Dendritic cell treated with granulocyte-macrophage colony-stimulating factor and Interleukin-4, amounts not matched to agents 40 ng/mL and 50 ng/mL, for 4 days (primary cell): ENCODE measurements at regions of chr18 and their contacts with region 1.

Region 1: GRCh38 chr18:21777814-21778213 is 37.2 kb downstream of the MIB1 start:
- H3K4me3 Mint-ChIP-seq: no peak overlapping the region
- H3K27ac Mint-ChIP-seq: no peak overlapping the region
- H3K4me1 Mint-ChIP-seq: no peaks in the 10 kb centered on the region
- H3K27me3 Mint-ChIP-seq: no peaks in the 10 kb centered on the region

Region 2: GRCh38 chr18:21820035-21820810 is 42.4 kb after region 1 on chr18:
- intact Hi-C with region 1: no loop called
- H3K4me3 Mint-ChIP-seq: no peak overlapping the region
- H3K27ac Mint-ChIP-seq: no peak overlapping the region
- H3K4me1 Mint-ChIP-seq: no peaks in the 10 kb centered on the region
- H3K27me3 Mint-ChIP-seq: no peaks in the 10 kb centered on the region

Region 3: DNA sequence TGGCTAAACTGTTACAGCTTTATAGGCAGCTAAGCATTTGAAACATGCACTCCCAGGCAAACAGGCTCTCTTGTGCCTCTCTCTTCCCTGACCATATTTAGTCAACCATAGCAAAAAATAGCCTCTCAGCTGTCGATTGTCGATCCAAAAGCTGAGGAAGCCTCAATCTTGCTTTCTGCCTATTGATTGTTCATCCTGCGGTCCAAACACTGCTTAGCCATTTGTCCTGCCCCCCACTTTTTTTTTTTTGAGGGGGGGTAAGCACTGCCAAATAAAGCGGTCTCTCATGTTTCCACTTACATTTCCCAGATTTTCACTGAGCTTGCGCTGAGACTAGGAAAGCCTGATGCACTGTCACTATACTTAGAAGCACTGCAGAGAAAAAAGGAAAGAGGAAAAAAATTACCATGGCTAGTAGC is 53.6 kb after region 1 on chr18:
- intact Hi-C with region 1: loop called (anchors 10 kb)
- H3K4me3 Mint-ChIP-seq: no peak overlapping the region
- H3K27ac Mint-ChIP-seq: no peak overlapping the region
- H3K4me1 Mint-ChIP-seq: no peaks in the 10 kb centered on the region
- H3K27me3 Mint-ChIP-seq: no peaks in the 10 kb centered on the region